Caco-2 (cell line): ENCODE measurements at regions of chr17 and their contacts with region 1.

Region 1: DNA sequence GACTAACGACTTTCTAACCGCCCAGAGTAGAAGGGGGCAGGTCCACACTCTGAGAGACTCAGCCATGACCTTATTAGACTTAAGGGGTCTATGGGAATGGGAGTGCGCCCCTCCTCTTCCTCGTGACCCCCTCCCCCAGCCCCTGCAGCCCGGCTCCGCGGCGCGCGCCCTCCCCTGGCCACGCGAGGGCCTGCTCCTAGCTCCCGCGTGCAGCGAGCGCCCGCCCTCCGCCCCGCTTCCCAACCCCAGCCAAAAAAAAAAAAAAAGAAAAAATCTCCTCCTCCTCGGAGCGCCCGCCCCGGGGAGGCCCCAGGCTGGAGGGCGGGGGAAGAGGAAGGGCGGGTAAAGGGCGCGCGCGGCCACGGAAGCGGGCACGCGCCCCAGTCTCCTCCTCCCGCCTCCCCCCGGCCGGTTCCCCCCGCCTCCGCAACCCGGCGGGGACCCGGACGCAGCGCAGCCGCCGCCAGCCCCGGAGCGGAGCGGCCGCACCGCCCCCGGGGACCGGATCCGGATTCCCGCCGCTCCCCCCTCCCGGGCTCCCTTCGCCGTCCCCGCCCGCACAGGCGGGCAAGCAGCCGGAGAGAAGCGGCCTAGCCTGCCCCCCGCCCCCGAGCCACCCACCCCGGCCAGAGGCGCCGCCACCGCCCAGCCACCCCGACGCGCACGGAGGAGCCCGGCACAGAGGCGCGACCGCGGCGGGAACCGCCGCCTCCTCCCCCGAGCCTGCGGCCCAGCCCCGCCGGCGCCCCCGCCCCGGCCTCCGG is 949 bp downstream of the UBTF start:
- DNase-seq: peak; percentile 88 to 93
- H3K4me3 ChIP-seq: peak overlapping the region; percentile 98
- H3K4me3 Mint-ChIP-seq: peak overlapping the region; percentile 79
- H3K27ac Mint-ChIP-seq: peak overlapping the region; percentile 47
- H3K4me1 ChIP-seq: peaks cover 9% of the 10 kb centered on the region
- H3K4me1 Mint-ChIP-seq: peaks cover 7% of the 10 kb centered on the region
- H3K27me3 ChIP-seq: no peaks in the 10 kb centered on the region
- H3K27me3 Mint-ChIP-seq: no peaks in the 10 kb centered on the region
- CTCF ChIP-seq: peak; percentile 64 to 70

Region 2: DNA sequence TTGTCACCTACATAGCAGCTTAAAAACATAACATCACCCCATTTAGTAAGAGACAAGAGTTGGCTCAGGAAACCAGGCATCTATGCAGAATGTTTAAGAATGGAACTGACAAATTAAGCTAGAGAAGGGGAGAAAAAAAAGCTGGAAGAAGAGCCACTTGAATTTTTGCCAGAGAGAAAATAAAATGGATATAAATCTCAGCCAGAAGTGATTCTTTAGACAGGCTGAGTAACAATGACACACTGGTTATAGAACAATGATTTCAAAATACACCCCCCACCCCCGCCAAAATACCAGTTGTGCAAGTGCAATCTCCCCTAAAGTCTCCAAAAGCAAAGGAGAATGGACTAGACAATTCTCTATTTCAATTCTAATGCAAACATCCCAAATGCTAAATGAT is 174.5 kb before region 1 on chr17:
- CTCF ChIA-PET with region 1: interaction called, 13 read pairs
- POLR2A ChIA-PET with region 1: no interaction called
- intact Hi-C with region 1: no loop called
- DNase-seq: no peak
- H3K4me3 ChIP-seq: no peak overlapping the region
- H3K4me3 Mint-ChIP-seq: no peak overlapping the region
- H3K27ac Mint-ChIP-seq: no peak overlapping the region
- H3K4me1 ChIP-seq: no peaks in the 10 kb centered on the region
- H3K4me1 Mint-ChIP-seq: peaks cover 6% of the 10 kb centered on the region
- H3K27me3 ChIP-seq: no peaks in the 10 kb centered on the region
- H3K27me3 Mint-ChIP-seq: no peaks in the 10 kb centered on the region
- CTCF ChIP-seq: no peak

Region 3: GRCh38 chr17:44186307-44187130 is 32.0 kb before region 1 on chr17 and contains the start of gene TMUB2:
- CTCF ChIA-PET with region 1: interaction called, 15 read pairs
- POLR2A ChIA-PET with region 1: interaction called, 9 read pairs
- intact Hi-C with region 1: loop called (anchors 1 kb)
- DNase-seq: peak; percentile 99 to 100
- H3K4me3 ChIP-seq: peak within 1 kb of the TSS; percentile 91
- H3K4me3 Mint-ChIP-seq: peak within 1 kb of the TSS; percentile 90
- H3K27ac Mint-ChIP-seq: peak within 1 kb of the TSS; percentile 91
- H3K4me1 ChIP-seq: peaks cover 10% of the 10 kb centered on the region; the same call in 1 of the 2 replicates
- H3K4me1 Mint-ChIP-seq: peaks cover 8% of the 10 kb centered on the region
- H3K27me3 ChIP-seq: no peaks in the 10 kb centered on the region
- H3K27me3 Mint-ChIP-seq: no peaks in the 10 kb centered on the region
- CTCF ChIP-seq: no peak
- total RNA-seq, gene TMUB2: 28.4 and 30.3 TPM in 2 replicates

Region 4: GRCh38 chr17:44199553-44200477 is 18.7 kb before region 1 on chr17 and contains the start of gene ATXN7L3:
- CTCF ChIA-PET with region 1: interaction called, 9 read pairs
- POLR2A ChIA-PET with region 1: interaction called, 10 read pairs
- intact Hi-C with region 1: loop called (anchors 1 kb)
- DNase-seq: peak; percentile 99 to 100
- H3K4me3 ChIP-seq: peak within 1 kb of the TSS; percentile 91
- H3K4me3 Mint-ChIP-seq: peak within 1 kb of the TSS; percentile 96
- H3K27ac Mint-ChIP-seq: peak within 1 kb of the TSS; percentile 93
- H3K4me1 ChIP-seq: peaks cover 14% of the 10 kb centered on the region; the same call in 1 of the 2 replicates
- H3K4me1 Mint-ChIP-seq: peaks cover 26% of the 10 kb centered on the region
- H3K27me3 ChIP-seq: no peaks in the 10 kb centered on the region
- H3K27me3 Mint-ChIP-seq: no peaks in the 10 kb centered on the region
- CTCF ChIP-seq: no peak
- total RNA-seq, gene ATXN7L3: 91.2 and 92.0 TPM in 2 replicates

Region 5: GRCh38 chr17:44308320-44308818 is 89.8 kb after region 1 on chr17 and contains the start of gene RUNDC3A:
- CTCF ChIA-PET with region 1: interaction called, 6 read pairs
- POLR2A ChIA-PET with region 1: interaction called, 8 read pairs
- intact Hi-C with region 1: loop called (anchors 5 kb)
- DNase-seq: peak; percentile 91 to 96
- H3K4me3 ChIP-seq: peak within 1 kb of the TSS; percentile 66
- H3K4me3 Mint-ChIP-seq: peak within 1 kb of the TSS; percentile 81
- H3K27ac Mint-ChIP-seq: peak within 1 kb of the TSS; percentile 59
- H3K4me1 ChIP-seq: no peaks in the 10 kb centered on the region
- H3K4me1 Mint-ChIP-seq: peaks cover 10% of the 10 kb centered on the region
- H3K27me3 ChIP-seq: no peaks in the 10 kb centered on the region
- H3K27me3 Mint-ChIP-seq: peaks cover 10% of the 10 kb centered on the region
- CTCF ChIP-seq: no peak
- total RNA-seq, gene RUNDC3A: 0.34 and 0.53 TPM in 2 replicates

Region 6: DNA sequence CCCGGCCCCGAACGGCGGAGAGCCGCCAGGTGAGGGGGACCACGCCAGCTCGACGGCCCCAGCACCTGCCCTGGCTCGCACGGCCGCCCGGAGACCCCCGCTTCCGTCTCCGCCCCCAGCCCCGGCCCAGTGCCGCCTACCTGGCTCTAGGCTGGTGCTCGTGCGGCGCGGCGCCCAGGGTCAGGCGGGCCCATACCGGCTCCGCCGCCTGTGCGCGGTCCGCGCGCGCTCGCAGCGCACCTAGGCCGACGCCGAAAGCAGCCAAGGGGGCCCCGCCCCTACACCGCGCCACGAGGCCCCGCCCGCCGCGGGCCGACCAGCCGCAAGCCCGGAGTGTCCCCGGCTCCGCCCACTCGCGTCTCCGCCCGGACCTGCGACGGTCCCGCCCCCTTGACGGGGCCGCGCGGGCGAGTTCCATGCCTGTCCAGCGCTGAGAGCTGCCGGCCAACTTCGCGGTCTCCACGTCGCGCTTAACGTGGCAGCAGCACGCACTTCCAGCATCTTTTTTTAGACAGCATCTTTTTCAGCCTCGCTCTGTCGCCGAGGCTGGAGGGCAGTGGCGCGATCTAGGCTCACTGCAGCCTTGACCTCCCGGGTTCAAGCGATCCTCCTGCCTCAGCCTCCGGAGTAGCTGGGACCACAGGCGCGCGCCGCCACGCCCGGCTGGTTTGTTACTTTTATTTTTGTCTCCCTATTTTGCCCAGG is 106.2 kb after region 1 on chr17 and contains the start of gene SLC25A39:
- CTCF ChIA-PET with region 1: interaction called, 5 read pairs
- POLR2A ChIA-PET with region 1: interaction called, 11 read pairs
- intact Hi-C with region 1: loop called (anchors 2 kb)
- DNase-seq: peak; percentile 94 to 99
- H3K4me3 ChIP-seq: peak within 1 kb of the TSS; percentile 84
- H3K4me3 Mint-ChIP-seq: peak within 1 kb of the TSS; percentile 93
- H3K27ac Mint-ChIP-seq: peak within 1 kb of the TSS; percentile 85
- H3K4me1 ChIP-seq: peaks cover 8% of the 10 kb centered on the region
- H3K4me1 Mint-ChIP-seq: no peaks in the 10 kb centered on the region
- H3K27me3 ChIP-seq: no peaks in the 10 kb centered on the region
- H3K27me3 Mint-ChIP-seq: no peaks in the 10 kb centered on the region
- CTCF ChIP-seq: no peak
- total RNA-seq, gene SLC25A39: 155 and 172 TPM in 2 replicates